ENCODE measurements at regions of chr3 and their contacts with region 1.

Region 1: GRCh38 chr3:46368569-46368968 is 2.2 kb upstream of the CCR5 start:
- DNase-seq: peak; percentile 52
- H3K4me3 Mint-ChIP-seq: no peak overlapping the region
- H3K27ac Mint-ChIP-seq: no peak overlapping the region
- H3K4me1 Mint-ChIP-seq: peaks cover 8% of the 10 kb centered on the region
- H3K27me3 Mint-ChIP-seq: peaks cover 73% of the 10 kb centered on the region
- CTCF ChIP-seq: no peak

Region 2: DNA sequence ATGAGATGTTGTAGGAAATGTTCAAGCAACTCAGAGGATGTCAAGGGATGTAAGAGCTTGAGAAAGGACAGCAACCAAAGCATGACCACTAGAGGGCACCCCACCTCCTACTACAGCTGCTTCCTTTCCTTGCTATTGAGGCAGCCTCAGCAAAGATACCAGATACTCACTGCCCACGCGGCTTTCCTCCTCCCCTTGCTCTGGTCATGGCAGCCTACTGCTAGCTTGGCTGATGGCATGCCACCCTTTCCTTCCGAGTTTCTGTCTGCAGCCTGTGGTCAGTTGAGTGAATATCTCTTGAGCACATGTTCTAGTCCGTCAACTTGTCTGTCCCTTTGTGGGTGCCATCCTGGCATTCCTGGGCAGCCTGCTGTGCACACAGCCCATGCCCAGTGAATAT is 429.7 kb before region 1 on chr3:
- CTCF ChIA-PET with region 1: interaction called, 5 read pairs
- intact Hi-C with region 1: loop called (anchors 2 kb)
- DNase-seq: peak; percentile 82
- H3K4me3 Mint-ChIP-seq: no peak overlapping the region
- H3K27ac Mint-ChIP-seq: no peak overlapping the region
- H3K4me1 Mint-ChIP-seq: peaks cover 8% of the 10 kb centered on the region
- H3K27me3 Mint-ChIP-seq: no peaks in the 10 kb centered on the region
- CTCF ChIP-seq: peak; percentile 54

Region 3: DNA sequence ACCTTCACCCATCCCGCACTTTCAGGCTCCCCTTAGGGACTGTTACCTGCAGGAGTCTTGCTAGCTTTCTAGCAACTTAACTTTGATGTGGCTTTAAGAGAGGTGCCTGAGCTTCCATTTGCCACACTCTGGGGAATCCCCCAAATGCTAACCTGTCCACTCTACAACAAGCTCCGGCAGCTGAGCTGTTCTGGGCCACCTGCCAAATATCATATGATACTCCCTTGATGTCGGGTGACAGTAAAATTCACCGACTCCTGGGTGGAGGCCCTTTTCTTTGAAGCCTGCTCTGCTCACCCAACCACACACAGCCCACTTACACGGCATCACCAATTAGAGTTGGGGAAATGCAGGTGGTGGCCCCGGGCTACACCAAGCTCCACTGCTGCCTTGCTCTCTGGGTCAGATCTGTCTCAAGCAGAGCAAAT is 303.3 kb before region 1 on chr3:
- CTCF ChIA-PET with region 1: no interaction called
- intact Hi-C with region 1: no loop called
- DNase-seq: peak; percentile 65
- H3K4me3 Mint-ChIP-seq: no peak overlapping the region
- H3K27ac Mint-ChIP-seq: no peak overlapping the region
- H3K4me1 Mint-ChIP-seq: peaks cover 13% of the 10 kb centered on the region
- H3K27me3 Mint-ChIP-seq: peaks cover 63% of the 10 kb centered on the region
- CTCF ChIP-seq: no peak

Region 4: DNA sequence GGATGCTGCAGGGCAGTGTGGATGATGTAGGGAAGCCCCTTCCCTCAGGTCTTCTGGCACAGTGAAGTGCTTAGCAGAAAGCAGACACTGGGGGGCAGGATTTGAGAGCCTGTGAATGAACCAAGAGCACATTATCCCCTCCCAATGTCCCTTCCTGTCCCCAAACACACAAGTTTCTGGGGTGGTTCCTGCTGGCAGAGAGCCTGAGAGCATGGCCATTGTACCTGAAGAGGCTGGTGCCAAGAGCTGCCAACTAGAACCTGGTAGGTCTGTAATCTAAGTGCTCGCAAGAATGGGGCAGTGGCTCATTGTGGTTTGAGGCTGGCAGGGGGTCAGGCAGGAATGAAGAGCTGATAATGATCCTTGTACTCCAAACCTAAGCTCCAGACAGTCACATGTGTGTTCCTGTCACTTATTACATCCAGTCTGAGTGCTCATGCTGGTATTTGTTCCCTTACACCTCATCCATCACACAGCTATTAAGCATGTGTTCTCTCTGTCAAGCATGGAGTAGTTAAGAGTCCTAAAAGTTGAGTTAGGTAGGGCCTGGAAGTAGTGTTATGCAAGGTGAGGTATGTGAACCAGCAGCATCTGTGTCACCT is 153.7 kb before region 1 on chr3:
- CTCF ChIA-PET with region 1: interaction called, 8 read pairs
- intact Hi-C with region 1: loop called (anchors 2 kb)
- DNase-seq: peak; percentile 44
- H3K4me3 Mint-ChIP-seq: no peak overlapping the region
- H3K27ac Mint-ChIP-seq: no peak overlapping the region
- H3K4me1 Mint-ChIP-seq: peaks cover 10% of the 10 kb centered on the region
- H3K27me3 Mint-ChIP-seq: no peaks in the 10 kb centered on the region
- CTCF ChIP-seq: peak; percentile 36

Region 5: GRCh38 chr3:46496741-46497554 is 128.4 kb after region 1 on chr3:
- CTCF ChIA-PET with region 1: no interaction called
- intact Hi-C with region 1: no loop called
- DNase-seq: peak; percentile 38
- H3K4me3 Mint-ChIP-seq: no peak overlapping the region
- H3K27ac Mint-ChIP-seq: no peak overlapping the region
- H3K4me1 Mint-ChIP-seq: no peaks in the 10 kb centered on the region
- H3K27me3 Mint-ChIP-seq: peaks cover 11% of the 10 kb centered on the region
- CTCF ChIP-seq: peak; percentile 30